ENCODE measurements at regions of chr16 and their contacts with region 1.

Region 1: DNA sequence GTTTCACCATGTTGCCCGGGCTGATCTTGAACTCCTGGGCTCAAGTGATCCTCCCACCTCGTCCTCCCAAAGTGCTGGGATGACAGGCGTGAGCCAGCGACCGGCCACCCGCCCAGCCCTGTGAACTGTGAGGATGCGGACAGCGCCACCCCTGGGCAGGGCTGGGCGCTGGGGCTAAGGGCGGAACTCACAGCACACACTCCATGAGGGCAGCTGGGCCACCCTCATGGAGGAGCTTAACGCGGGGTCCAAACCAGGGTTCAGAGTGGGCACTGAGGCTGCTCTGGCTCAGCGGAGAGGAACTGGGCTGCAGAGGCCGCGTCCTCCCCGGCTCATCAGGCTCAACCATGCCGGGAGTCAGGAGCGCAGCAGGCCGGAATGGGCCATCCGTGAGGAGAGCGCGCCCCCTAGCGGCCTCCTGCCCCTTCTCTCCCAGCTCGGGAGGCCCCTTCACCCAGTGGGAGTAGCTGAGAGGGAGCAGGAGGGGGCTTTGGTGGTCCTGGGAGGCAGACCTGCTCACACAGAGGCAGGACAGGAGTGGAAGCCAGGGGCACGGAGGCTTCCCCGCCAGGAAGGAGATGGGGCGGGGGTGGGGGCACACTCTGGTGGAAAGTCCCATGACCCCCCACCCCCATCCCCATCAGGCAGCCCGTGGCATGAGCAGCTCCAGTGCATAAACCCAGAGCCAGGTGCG is 13.8 kb downstream of the CORO7 start:
- DNase-seq: peak; percentile 78
- H3K4me3 Mint-ChIP-seq: no peak overlapping the region
- H3K27ac Mint-ChIP-seq: no peak overlapping the region
- H3K4me1 Mint-ChIP-seq: peaks cover 2% of the 10 kb centered on the region
- H3K27me3 Mint-ChIP-seq: no peaks in the 10 kb centered on the region

Region 2: DNA sequence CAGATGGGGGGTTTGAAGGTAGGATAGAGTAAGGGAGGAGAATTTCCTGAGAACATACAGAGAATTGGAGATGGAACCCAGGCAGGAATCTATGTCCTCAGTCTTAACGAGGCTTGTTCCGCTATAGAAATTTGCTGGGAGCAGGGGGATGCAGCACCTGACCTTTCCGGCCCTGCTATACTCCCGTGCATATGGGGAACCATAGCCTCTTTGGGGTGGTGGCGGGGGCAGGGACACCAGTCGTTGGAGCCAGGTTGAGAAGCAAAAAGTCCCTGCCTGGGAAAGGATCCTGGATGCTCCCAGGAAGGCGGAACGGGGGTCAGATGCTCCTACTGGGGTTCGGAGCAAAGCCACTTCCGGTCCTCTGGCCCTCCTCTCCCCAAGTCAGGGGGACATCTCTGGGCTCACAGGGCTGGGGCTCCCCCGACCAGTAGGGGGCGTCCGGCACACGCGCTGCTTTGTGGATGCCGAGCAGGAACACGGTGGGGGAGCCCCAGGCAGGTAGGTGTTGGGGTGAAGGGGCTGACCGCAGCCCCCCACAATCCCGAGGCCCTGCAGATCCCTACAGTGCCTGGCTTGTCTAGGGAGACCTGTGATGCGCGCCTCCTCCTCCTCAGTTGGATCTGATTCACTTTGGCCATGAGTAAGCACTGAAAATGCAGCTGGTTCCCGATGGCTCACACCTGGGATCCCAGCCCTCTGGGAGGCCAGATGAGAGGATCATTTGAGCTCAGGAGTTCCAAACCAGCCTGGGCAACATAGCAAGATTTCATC is 114.3 kb before region 1 on chr16:
- CTCF ChIA-PET with region 1: interaction called, 4 read pairs
- intact Hi-C with region 1: loop called (anchors 5 kb)
- DNase-seq: peak; percentile 84
- H3K4me3 Mint-ChIP-seq: no peak overlapping the region
- H3K27ac Mint-ChIP-seq: no peak overlapping the region
- H3K4me1 Mint-ChIP-seq: peaks cover 9% of the 10 kb centered on the region
- H3K27me3 Mint-ChIP-seq: peaks cover 9% of the 10 kb centered on the region

Region 3: GRCh38 chr16:4307215-4308037 is 95.2 kb before region 1 on chr16:
- CTCF ChIA-PET with region 1: interaction called, 18 read pairs
- intact Hi-C with region 1: no loop called
- DNase-seq: peak; percentile 95
- H3K4me3 Mint-ChIP-seq: peak overlapping the region; percentile 84
- H3K27ac Mint-ChIP-seq: peak overlapping the region; percentile 85
- H3K4me1 Mint-ChIP-seq: peaks cover 24% of the 10 kb centered on the region
- H3K27me3 Mint-ChIP-seq: no peaks in the 10 kb centered on the region

Region 4: GRCh38 chr16:4358831-4359561 is 43.6 kb before region 1 on chr16:
- CTCF ChIA-PET with region 1: interaction called, 13 read pairs
- intact Hi-C with region 1: loop called (anchors 1 kb)
- DNase-seq: peak; percentile 76
- H3K4me3 Mint-ChIP-seq: no peak overlapping the region
- H3K27ac Mint-ChIP-seq: no peak overlapping the region
- H3K4me1 Mint-ChIP-seq: no peaks in the 10 kb centered on the region
- H3K27me3 Mint-ChIP-seq: no peaks in the 10 kb centered on the region

Measured in activated naive CD4-positive, alpha-beta T cell treated with anti-CD3 and anti-CD28 coated beads for 36 hours (primary cell).